ENCODE measurements at regions of chr10 and their contacts with region 1.

Region 1: DNA sequence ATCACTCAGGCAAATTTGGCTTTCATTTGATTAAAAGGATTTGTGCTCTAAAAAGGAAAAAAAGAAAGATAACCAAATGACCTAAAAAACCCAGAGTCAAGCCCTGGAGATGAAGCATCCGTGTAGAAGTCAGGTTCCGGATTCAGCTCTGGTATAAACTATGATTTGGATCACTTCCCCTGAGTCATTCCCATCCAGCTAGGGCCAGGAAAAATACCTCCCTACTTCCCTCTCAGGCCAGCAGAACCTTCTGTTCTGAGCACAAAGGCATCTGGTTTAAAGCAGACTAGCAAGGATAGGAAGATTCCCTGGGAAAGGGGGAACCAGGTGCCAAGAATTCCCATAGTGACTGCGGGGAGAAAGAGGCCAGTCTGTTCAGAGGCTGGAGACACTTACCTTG is 25.7 kb upstream of the NDST2 start:
- DNase-seq: no peak
- ATAC-seq: no peak
- H3K4me3 ChIP-seq: no peak overlapping the region
- H3K27ac ChIP-seq: no peak overlapping the region
- H3K4me1 ChIP-seq: peaks cover 46% of the 10 kb centered on the region
- H3K27me3 ChIP-seq: no peaks in the 10 kb centered on the region
- CTCF ChIP-seq: no peak
- EP300 ChIP-seq: no peak
- POLR2A ChIP-seq: no peak
- RAD21 ChIP-seq: no peak

Region 2: GRCh38 chr10:73439605-73440312 is 397.3 kb before region 1 on chr10:
- CTCF ChIA-PET with region 1: no interaction called
- POLR2A ChIA-PET with region 1: no interaction called
- in situ Hi-C with region 1: no loop called
- intact Hi-C with region 1: no loop called
- DNase-seq: no peak
- ATAC-seq: no peak
- H3K4me3 ChIP-seq: no peak overlapping the region
- H3K27ac ChIP-seq: no peak overlapping the region
- H3K4me1 ChIP-seq: no peaks in the 10 kb centered on the region
- H3K27me3 ChIP-seq: no peaks in the 10 kb centered on the region
- CTCF ChIP-seq: no peak
- EP300 ChIP-seq: no peak
- POLR2A ChIP-seq: no peak
- RAD21 ChIP-seq: no peak

Region 3: DNA sequence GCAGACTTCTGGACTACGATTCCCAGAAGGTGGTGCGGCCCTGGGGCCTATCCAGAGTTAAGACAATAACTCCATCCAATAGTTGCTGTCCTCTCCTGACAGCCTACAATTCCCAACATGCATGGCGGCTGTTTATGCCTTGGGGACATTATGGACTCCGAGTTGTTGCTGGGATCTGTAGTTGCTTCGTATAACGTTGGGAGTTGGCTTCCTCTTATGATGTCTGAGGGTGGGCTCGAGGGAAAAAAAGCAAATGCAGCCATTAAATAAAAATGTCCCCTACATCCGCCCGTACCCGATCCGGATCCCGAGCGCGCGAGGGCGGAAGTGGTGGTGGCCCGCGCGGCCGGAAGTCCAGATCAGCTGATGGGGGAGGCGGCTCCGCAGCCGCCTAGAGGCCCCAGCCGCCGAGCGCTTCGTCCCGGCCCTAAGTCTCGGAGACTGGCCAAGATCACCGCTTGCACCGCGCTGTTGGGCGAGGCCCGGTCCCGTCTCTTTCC is 51.8 kb before region 1 on chr10 and contains the start of gene ZSWIM8:
- CTCF ChIA-PET with region 1: no interaction called
- POLR2A ChIA-PET with region 1: interaction called, 16 read pairs
- in situ Hi-C with region 1: no loop called
- intact Hi-C with region 1: no loop called
- DNase-seq: peak; percentile 95
- ATAC-seq: peak; percentile 87
- H3K4me3 ChIP-seq: peak within 1 kb of the TSS; percentile 75 to 95 (median 90)
- H3K27ac ChIP-seq: peak within 1 kb of the TSS; percentile 70
- H3K4me1 ChIP-seq: peaks cover 54% of the 10 kb centered on the region
- H3K27me3 ChIP-seq: no peaks in the 10 kb centered on the region; a peak in 1 of 5 replicates
- CTCF ChIP-seq: no peak
- EP300 ChIP-seq: no peak
- POLR2A ChIP-seq: peak; percentile 61; a peak in 2 of 4 replicates
- RAD21 ChIP-seq: no peak
- total RNA-seq, gene ZSWIM8: 21.0 and 39.9 TPM in 2 replicates

Region 4: GRCh38 chr10:73848821-73849489 is 11.9 kb after region 1 on chr10:
- CTCF ChIA-PET with region 1: no interaction called
- POLR2A ChIA-PET with region 1: interaction called, 11 read pairs
- in situ Hi-C with region 1: no loop called
- intact Hi-C with region 1: no loop called
- DNase-seq: peak; percentile 62
- ATAC-seq: peak; percentile 93
- H3K4me3 ChIP-seq: no peak overlapping the region
- H3K27ac ChIP-seq: no peak overlapping the region
- H3K4me1 ChIP-seq: peaks cover under 1% of the 10 kb centered on the region; the same call in 1 of the 2 replicates
- H3K27me3 ChIP-seq: no peaks in the 10 kb centered on the region
- CTCF ChIP-seq: peak; percentile 97
- EP300 ChIP-seq: no peak
- POLR2A ChIP-seq: no peak
- RAD21 ChIP-seq: peak; percentile 94

Region 5: DNA sequence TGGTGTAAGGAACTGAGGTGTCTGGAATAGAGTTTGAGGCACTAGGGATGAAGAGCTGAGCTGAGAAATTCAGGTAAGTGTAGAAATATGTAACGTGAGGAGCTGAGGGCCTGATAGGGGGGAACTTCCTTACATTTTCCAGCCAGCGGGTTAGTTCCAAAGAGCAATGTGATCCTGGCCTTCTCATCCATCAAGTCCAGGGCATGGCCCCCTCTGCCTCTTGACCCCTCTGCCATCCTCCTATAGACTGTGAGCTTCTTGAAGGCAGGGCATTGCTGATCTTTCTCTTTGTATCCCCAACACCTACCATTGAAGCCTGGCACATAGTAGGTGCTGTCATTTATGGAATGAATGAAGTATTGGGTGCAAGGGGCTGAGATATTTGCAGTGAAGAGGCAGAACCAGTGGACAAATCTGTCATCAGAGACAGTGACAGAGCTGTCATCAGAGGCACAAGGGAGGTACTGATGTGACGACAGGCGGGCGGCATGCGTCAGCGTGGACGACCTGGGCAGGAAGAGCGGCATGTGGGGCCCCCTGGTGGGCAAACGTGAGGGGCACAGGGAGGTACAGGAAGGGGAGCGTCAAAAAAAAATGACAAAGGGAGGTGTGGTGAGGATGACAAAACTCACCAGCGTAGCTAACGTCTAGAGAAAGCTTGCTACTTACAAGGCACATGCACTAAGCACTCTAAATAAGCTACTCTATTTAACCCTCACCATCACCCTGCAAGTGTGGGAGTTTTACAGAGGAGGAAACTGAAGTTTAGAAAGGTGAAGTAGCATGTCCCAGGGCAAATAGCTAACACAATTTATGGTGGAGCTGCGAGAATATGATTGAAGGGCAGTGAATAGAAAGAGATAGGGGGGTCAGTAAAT is 42.5 kb after region 1 on chr10:
- CTCF ChIA-PET with region 1: no interaction called
- POLR2A ChIA-PET with region 1: interaction called, 23 read pairs
- in situ Hi-C with region 1: no loop called
- intact Hi-C with region 1: no loop called
- DNase-seq: peak; percentile 74
- ATAC-seq: peak; percentile 90
- H3K4me3 ChIP-seq: no peak overlapping the region
- H3K27ac ChIP-seq: no peak overlapping the region
- H3K4me1 ChIP-seq: peaks cover 39% of the 10 kb centered on the region
- H3K27me3 ChIP-seq: no peaks in the 10 kb centered on the region; a peak in 2 of 5 replicates
- CTCF ChIP-seq: peak; percentile 96
- EP300 ChIP-seq: no peak
- POLR2A ChIP-seq: no peak
- RAD21 ChIP-seq: peak; percentile 90

Measured in HepG2 (cell line).